Spleen (tissue), 13 donors: ENCODE measurements at regions of chr17 and their contacts with region 1.

Region 1: DNA sequence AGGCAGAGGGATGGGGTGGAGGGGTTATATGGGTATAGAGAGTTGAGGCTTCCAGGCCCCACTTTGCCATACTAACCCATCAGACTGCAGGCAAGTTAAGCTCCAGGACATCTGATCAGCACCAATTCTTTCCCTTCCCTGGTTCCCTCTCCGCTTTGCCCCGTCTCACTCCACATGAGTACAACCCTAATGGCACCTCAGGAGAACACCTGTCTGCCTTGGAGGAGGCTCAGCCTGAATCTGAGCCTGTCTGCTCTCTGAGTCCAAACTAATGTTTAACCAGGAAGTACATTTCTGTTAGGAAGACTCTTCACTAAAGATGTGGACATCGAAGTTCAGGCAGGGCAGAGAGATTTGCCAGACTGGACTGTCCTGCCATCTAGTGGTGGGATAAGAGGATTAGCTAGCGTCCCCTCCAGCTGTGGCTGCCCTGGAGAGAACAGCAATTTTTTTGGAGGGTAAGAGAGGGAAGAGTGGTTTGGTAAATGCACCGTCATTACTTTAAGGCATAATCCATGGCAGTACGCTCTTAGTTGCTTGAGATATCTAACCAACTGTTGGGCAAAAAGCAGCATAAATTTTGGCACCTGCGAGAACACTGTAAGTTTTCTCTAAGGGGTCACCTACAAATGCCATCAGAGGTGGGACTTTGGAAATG is 29.2 kb upstream of the LRRC75A start:
- DNase-seq: peak; percentile 82
- H3K4me3 ChIP-seq: no peak overlapping the region
- H3K27ac ChIP-seq: peak overlapping the region in 1 of 8 donors; percentile 23
- H3K4me1 ChIP-seq: peaks cover 0 to 19% (median 10%) of the 10 kb centered on the region in 6 donors
- H3K27me3 ChIP-seq: peaks cover 0 to 15% (median 0%) of the 10 kb centered on the region in 7 donors
- CTCF ChIP-seq: peak; percentile 88 to 95 (median 92)
- POLR2A ChIP-seq: no peak

Region 2: GRCh38 chr17:16380640-16381495 is 140.3 kb before region 1 on chr17 and contains the start of gene UBB:
- intact Hi-C with region 1: loop called (anchors 5 kb)
- DNase-seq: peak; percentile 98
- H3K4me3 ChIP-seq: peak within 1 kb of the TSS; percentile 48 to 79 (median 63)
- H3K27ac ChIP-seq: peak within 1 kb of the TSS; percentile 89 to 99 (median 95)
- H3K4me1 ChIP-seq: peaks cover 19 to 60% (median 41%) of the 10 kb centered on the region in 6 donors
- H3K27me3 ChIP-seq: no peaks in the 10 kb centered on the region
- CTCF ChIP-seq: peak in 3 of 11 experiments; percentile 24 to 31 (median 28)
- POLR2A ChIP-seq: peak; percentile 98 to 99 (median 99)
- total RNA-seq, gene UBB: 822 to 1,795 (median 1,121) TPM

Region 3: GRCh38 chr17:16453493-16453851 is 67.7 kb before region 1 on chr17:
- intact Hi-C with region 1: loop called (anchors 5 kb)
- DNase-seq: no peak
- H3K4me3 ChIP-seq: no peak overlapping the region
- H3K27ac ChIP-seq: peak overlapping the region in 3 of 8 donors; percentile 28 to 45 (median 34)
- H3K4me1 ChIP-seq: peaks cover 0 to 23% (median 10%) of the 10 kb centered on the region in 6 donors
- H3K27me3 ChIP-seq: no peaks in the 10 kb centered on the region
- CTCF ChIP-seq: peak in 2 of 11 experiments; percentile 0 to 9
- POLR2A ChIP-seq: no peak